Gastrocnemius medialis (tissue), 4 donors: ENCODE measurements at regions of chr12 and their contacts with region 1.

Region 1: DNA sequence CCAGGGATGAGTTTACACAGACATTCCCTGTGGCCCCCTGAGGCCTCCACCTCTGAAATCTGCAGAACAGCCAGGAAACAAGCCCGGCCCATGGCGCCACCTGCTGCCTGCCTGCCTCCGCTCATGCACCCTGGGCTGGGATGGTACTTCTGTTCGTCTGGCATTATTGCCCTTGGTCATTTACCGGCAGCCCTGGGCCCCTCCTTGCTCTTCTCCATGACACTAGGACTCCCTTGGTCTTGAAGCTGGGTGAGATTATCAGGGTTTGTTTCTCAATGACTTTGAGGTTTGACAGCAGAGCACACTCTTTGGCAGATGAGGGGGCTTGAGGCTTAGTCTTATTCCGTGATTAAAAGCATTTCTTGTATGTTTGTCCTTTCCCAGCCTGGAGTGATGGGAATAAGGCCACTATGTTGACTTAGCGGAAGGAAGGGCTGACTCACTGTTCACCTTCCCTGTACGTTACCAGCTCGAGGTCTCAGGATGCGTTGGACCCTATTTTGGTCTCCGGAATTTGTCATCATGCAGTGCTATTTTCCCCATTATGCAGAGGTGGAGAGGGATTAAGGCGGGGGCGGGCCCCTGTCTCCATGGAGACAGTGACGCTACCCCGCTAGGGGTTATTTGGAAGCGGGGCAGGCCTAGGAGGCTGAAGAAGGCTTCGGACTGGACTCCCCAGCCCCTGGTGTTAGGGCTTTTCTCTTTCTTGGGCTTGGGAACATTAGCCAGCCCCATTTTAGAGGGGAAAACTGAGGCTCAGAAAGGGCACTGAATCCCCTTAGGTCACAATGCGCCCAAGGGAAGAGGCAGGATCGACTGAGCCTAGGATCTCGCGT is 706 bp upstream of the PEX5 start:
- DNase-seq: peak; percentile 17 to 58
- ATAC-seq: peak; percentile 58 to 60
- H3K4me3 ChIP-seq: peak overlapping the region; percentile 82 to 96 (median 82)
- H3K27ac ChIP-seq: peak overlapping the region; percentile 90 to 96 (median 94)
- H3K4me1 ChIP-seq: peaks cover 20 to 21% of the 10 kb centered on the region in 2 donors
- H3K27me3 ChIP-seq: no peaks in the 10 kb centered on the region
- CTCF ChIP-seq: peak; percentile 22 to 61 (median 47)
- POLR2A ChIP-seq: no peak

Region 2: DNA sequence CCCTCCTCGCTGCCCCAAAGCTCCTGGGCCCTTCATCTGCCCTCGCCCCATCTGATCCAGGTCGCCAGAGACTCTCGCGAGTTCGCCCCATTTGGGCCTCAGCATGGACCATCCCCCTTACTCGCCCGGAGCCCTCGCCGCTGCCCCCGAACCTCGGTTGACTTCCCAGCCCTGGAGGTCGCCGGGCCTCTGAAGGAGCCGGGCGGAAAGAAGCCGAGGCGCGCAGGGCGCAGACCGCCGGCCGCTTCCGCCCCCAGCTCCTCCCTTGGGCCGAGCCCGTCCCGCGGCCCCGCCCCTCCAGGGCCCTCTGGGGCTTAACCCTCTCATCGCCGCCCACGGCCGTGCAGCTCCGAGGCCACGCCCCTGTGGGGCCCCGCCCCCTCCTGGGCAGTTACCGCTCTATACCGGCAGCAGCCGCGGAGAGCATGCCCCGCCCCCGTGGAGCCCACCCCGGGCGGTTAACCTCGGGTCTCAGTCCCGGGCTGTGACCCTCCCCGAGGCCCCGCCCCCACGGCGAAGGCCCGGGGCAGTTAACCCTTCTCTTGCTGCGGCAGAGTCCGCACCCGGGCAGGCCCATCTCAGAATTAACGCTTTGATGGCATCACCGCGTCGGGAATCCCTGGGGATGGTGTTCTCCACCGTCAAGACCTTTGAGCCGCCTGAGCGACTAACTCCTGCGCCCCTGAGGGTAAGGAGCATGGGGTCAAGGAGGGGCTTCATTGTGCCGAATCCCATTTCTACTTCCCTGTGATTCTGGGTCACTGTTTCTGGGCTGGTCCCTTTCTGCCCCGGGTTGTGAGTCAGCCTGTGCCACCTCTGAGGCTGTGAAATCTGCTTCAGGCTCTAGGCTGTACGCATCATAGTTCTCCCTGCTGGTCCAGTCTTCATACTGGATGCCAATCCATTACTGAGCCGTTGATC is 315.4 kb before region 1 on chr12 and contains the start of gene SPSB2:
- in situ Hi-C with region 1: no loop called
- intact Hi-C with region 1: loop called (anchors 2 kb)
- DNase-seq: peak; percentile 91 to 93
- ATAC-seq: peak; percentile 81 to 82
- H3K4me3 ChIP-seq: peak within 1 kb of the TSS; percentile 84 to 96 (median 90)
- H3K27ac ChIP-seq: peak within 1 kb of the TSS; percentile 82 to 100 (median 90)
- H3K4me1 ChIP-seq: peaks cover 29% of the 10 kb centered on the region in 2 donors
- H3K27me3 ChIP-seq: no peaks in the 10 kb centered on the region
- CTCF ChIP-seq: no peak
- POLR2A ChIP-seq: peak; percentile 75 to 79
- total RNA-seq, gene SPSB2: 4.6 to 10.0 (median 5.0) TPM

Region 3: DNA sequence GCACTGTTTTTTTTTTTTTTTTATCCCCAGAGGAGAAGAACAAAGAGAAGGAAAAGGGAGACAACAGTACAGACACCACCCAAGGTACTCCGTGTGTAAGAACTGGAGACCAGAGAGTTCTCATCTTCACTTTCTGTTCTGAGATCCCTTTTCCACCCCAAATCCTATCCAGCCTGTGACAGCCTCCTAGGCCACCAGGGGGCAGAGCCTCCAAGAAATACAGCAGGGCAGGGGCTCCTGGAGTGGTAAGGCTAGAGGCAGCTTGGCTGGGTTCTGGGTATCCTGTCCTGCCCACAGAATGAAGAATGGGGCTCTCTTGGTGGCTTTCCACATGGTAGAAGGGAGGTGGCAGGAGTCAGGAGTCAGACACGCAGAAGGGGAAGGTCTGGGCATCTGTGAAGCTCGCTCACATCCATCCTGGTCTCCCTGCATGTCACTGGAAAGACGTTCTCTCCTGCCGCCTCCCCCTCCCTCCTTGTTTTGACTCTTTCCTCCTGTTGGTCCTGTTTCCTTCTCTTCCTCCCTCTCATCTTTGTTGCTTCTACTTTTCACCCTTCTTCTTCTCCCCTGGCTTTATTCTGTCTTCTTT is 46.6 kb before region 1 on chr12:
- in situ Hi-C with region 1: no loop called
- intact Hi-C with region 1: loop called (anchors 5 kb)
- DNase-seq: no peak
- ATAC-seq: peak in 1 of 2 donors; percentile 44
- H3K4me3 ChIP-seq: no peak overlapping the region
- H3K27ac ChIP-seq: no peak overlapping the region
- H3K4me1 ChIP-seq: no peaks in the 10 kb centered on the region
- H3K27me3 ChIP-seq: no peaks in the 10 kb centered on the region
- CTCF ChIP-seq: peak in 4 of 5 experiments; percentile 50 to 61 (median 55)
- POLR2A ChIP-seq: no peak

Region 4: GRCh38 chr12:8026291-8026900 is 837.6 kb after region 1 on chr12:
- in situ Hi-C with region 1: loop called in 2 of 4 experiments (anchors 25 kb)
- intact Hi-C with region 1: no loop called
- DNase-seq: peak; percentile 99
- ATAC-seq: peak; percentile 98 to 99
- H3K4me3 ChIP-seq: peak overlapping the region; percentile 77 to 98 (median 90)
- H3K27ac ChIP-seq: peak overlapping the region; percentile 98 to 100 (median 100)
- H3K4me1 ChIP-seq: no peaks in the 10 kb centered on the region
- H3K27me3 ChIP-seq: no peaks in the 10 kb centered on the region
- CTCF ChIP-seq: no peak
- POLR2A ChIP-seq: peak in 1 of 2 donors; percentile 68